PC-9 (cell line): ENCODE measurements at regions of chr11 and their contacts with region 1.

Region 1: DNA sequence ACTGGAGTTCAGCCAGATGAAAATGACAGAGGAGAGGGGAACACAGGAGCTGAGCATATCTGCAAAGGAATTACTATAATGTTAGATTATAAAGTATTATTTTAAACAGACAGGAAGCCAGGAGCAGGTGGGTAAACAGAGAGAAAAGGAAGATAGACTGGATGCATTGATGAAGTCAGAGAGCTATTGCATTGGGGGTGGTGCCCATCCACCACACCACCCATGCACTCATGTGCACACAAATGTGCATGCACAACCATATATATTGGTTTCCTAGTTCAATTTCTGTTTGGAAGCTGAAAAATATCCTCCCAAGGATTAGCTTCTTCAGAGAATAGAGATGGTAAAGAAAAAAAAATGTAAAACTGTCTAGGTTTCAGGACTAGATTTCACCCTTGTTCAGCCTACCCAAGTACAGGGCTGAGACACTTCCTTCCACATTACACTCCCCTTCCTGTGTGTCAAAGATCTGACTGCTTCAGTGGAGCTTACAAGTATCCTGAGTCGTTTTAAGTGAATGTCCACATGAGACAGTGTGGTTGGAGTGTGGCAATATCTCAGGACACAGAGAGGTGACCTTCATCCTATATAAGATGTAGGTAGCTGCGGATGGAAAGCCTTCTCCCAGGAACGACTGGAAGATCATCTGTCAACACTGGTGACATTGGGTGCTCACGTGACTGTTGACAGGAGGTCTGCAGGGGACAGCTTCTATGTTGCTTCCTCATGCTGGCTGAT is 12.2 kb upstream of the SMPD1 start:
- DNase-seq: no peak
- H3K4me3 ChIP-seq: no peak overlapping the region
- H3K27ac ChIP-seq: no peak overlapping the region
- H3K4me1 ChIP-seq: no peaks in the 10 kb centered on the region
- H3K27me3 ChIP-seq: 0 out of 2 replicates have a peak, but pooled peaks cover 7% of the 10 kb centered on the region
- CTCF ChIP-seq: no peak

Region 2: GRCh38 chr11:6443269-6444003 is 65.4 kb after region 1 on chr11:
- CTCF ChIA-PET with region 1: interaction called, 25 read pairs
- POLR2A ChIA-PET with region 1: no interaction called
- intact Hi-C with region 1: loop called (anchors 1 kb)
- DNase-seq: peak in 1 of 2 experiments; percentile 16
- H3K4me3 ChIP-seq: no peak overlapping the region
- H3K27ac ChIP-seq: no peak overlapping the region
- H3K4me1 ChIP-seq: no peaks in the 10 kb centered on the region
- H3K27me3 ChIP-seq: no peaks in the 10 kb centered on the region
- CTCF ChIP-seq: peak; percentile 65

Region 3: GRCh38 chr11:6505577-6506240 is 127.6 kb after region 1 on chr11:
- CTCF ChIA-PET with region 1: interaction called, 14 read pairs
- POLR2A ChIA-PET with region 1: no interaction called
- intact Hi-C with region 1: loop called (anchors 1 kb)
- DNase-seq: peak in 1 of 2 experiments; percentile 37
- H3K4me3 ChIP-seq: no peak overlapping the region
- H3K27ac ChIP-seq: no peak overlapping the region
- H3K4me1 ChIP-seq: no peaks in the 10 kb centered on the region
- H3K27me3 ChIP-seq: no peaks in the 10 kb centered on the region
- CTCF ChIP-seq: peak; percentile 72

Region 4: GRCh38 chr11:6705905-6706535 is 327.9 kb after region 1 on chr11:
- CTCF ChIA-PET with region 1: interaction called, 12 read pairs
- POLR2A ChIA-PET with region 1: no interaction called
- intact Hi-C with region 1: loop called (anchors 1 kb)
- DNase-seq: peak in 1 of 2 experiments; percentile 15
- H3K4me3 ChIP-seq: no peak overlapping the region
- H3K27ac ChIP-seq: no peak overlapping the region
- H3K4me1 ChIP-seq: no peaks in the 10 kb centered on the region
- H3K27me3 ChIP-seq: no peaks in the 10 kb centered on the region
- CTCF ChIP-seq: peak; percentile 79

Region 5: GRCh38 chr11:6757373-6757967 is 379.4 kb after region 1 on chr11:
- CTCF ChIA-PET with region 1: no interaction called
- POLR2A ChIA-PET with region 1: no interaction called
- intact Hi-C with region 1: loop called (anchors 5 kb)
- DNase-seq: peak in 1 of 2 experiments; percentile 9
- H3K4me3 ChIP-seq: no peak overlapping the region
- H3K27ac ChIP-seq: no peak overlapping the region
- H3K4me1 ChIP-seq: no peaks in the 10 kb centered on the region
- H3K27me3 ChIP-seq: no peaks in the 10 kb centered on the region
- CTCF ChIP-seq: peak; percentile 54